Activated CD8-positive, alpha-beta T cell treated with anti-CD3 and anti-CD28 coated beads, Interleukin-2, amount 10 ng/mL, durations not matched to agents 7 days and 5 days (primary cell): ENCODE measurements at regions of chr10 and their contacts with region 1.

Region 1: DNA sequence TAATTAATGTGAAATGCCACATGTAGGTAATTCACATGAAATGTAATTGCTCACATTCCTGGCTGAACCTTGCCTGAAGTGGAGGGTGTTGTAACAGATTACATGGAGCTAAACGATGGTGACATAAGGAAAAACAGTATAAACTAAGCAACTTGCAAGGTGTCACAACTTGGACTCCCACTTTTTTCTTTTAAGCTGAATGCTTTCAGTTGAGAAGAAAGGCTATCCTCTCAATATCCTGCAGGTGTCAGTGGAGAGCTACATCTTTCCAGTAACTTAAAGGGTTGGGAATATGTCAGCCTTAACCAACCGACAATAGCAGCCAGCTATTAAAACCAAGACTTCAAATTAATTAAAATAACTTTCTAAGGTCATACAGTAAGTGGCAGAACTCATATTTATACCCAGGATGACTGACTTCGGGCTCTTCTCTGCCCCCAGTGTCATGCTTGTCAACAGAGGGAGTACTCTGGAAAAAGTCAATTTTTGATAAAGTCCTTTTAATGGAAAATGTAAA is 33.7 kb downstream of the NRBF2 start:
- DNase-seq: peak; percentile 57
- ATAC-seq: peak; percentile 45
- H3K4me3 Mint-ChIP-seq: no peak overlapping the region
- H3K27ac Mint-ChIP-seq: no peak overlapping the region
- H3K4me1 Mint-ChIP-seq: peaks cover 43% of the 10 kb centered on the region
- H3K27me3 Mint-ChIP-seq: no peaks in the 10 kb centered on the region

Region 2: DNA sequence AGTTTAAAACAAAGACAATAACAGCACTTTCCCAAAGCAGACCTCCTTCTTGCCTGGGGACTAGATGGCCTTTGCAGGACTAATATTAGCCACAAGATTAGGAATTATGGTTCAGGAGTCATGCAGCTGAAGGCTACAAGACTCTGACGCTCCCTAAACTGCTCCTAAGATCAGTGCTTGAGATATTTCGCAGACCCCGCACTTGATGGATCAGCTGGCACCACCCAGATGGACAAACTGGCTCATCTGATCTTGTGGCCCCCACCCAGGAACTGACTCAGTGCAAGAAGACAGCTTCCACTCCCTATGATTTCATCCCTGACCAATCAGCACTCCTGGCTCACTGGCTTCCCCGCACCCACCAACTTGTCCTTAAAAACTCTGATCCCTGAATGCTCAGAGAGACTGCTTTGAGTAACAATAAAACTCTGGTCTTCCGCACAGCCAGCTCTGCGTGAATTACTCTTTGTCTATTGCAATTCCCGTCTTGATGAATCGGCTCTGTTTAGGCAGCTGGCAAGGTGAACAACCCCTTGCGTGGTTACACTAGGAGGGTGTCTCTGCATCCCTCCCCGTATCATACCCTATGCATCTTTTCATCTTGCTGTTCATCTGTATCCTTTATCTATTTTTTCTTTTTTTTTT is 60.6 kb before region 1 on chr10:
- CTCF ChIA-PET with region 1: no interaction called
- POLR2A ChIA-PET with region 1: no interaction called
- DNase-seq: no peak
- ATAC-seq: no peak
- H3K4me3 Mint-ChIP-seq: no peak overlapping the region
- H3K27ac Mint-ChIP-seq: no peak overlapping the region
- H3K4me1 Mint-ChIP-seq: no peaks in the 10 kb centered on the region
- H3K27me3 Mint-ChIP-seq: peaks cover 5% of the 10 kb centered on the region

Region 3: GRCh38 chr10:63133056-63133820 is 33.6 kb before region 1 on chr10 and contains the start of gene NRBF2:
- CTCF ChIA-PET with region 1: interaction called, 10 read pairs
- POLR2A ChIA-PET with region 1: interaction called, 5 read pairs
- DNase-seq: peak; percentile 98
- ATAC-seq: peak; percentile 96
- H3K4me3 Mint-ChIP-seq: peak within 1 kb of the TSS; percentile 91
- H3K27ac Mint-ChIP-seq: peak within 1 kb of the TSS; percentile 97
- H3K4me1 Mint-ChIP-seq: peaks cover 38% of the 10 kb centered on the region
- H3K27me3 Mint-ChIP-seq: no peaks in the 10 kb centered on the region
- total RNA-seq, gene NRBF2: 21.8 to 22.6 TPM

Region 4: GRCh38 chr10:63206997-63207811 is 40.4 kb after region 1 on chr10:
- CTCF ChIA-PET with region 1: interaction called, 21 read pairs
- POLR2A ChIA-PET with region 1: no interaction called
- DNase-seq: no peak
- ATAC-seq: peak; percentile 48
- H3K4me3 Mint-ChIP-seq: peak overlapping the region; percentile 38
- H3K27ac Mint-ChIP-seq: peak overlapping the region; percentile 75
- H3K4me1 Mint-ChIP-seq: peaks cover 65% of the 10 kb centered on the region
- H3K27me3 Mint-ChIP-seq: no peaks in the 10 kb centered on the region

Region 5: DNA sequence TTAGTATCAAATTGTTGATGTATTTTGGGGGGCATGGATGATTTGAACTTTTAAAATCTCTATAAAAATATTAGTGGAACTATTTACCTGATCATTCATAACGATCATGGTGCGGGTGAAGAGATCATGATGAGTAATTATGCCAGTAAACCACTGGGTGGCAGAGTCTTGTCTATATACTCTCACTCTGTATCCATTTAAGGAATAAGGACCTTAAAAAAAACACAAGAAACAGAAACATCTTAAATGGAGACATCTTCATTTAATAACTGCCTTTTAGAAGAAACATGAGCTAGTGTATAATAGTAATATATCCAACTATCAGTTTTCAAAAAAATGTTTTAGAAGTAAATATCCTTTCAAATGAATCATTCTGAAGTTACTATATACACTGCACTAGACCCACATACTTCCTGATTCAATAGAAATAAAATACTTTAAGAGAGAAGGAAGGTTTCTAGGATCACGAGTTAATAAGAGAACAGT is 50.4 kb after region 1 on chr10:
- CTCF ChIA-PET with region 1: interaction called, 21 read pairs
- POLR2A ChIA-PET with region 1: no interaction called
- DNase-seq: peak; percentile 46
- ATAC-seq: peak; percentile 81
- H3K4me3 Mint-ChIP-seq: no peak overlapping the region
- H3K27ac Mint-ChIP-seq: no peak overlapping the region
- H3K4me1 Mint-ChIP-seq: peaks cover 45% of the 10 kb centered on the region
- H3K27me3 Mint-ChIP-seq: no peaks in the 10 kb centered on the region

Region 6: GRCh38 chr10:63261496-63261895 is 94.7 kb after region 1 on chr10:
- CTCF ChIA-PET with region 1: interaction called, 16 read pairs
- POLR2A ChIA-PET with region 1: no interaction called
- DNase-seq: no peak
- ATAC-seq: no peak
- H3K4me3 Mint-ChIP-seq: peak overlapping the region; percentile 31
- H3K27ac Mint-ChIP-seq: peak overlapping the region; percentile 52
- H3K4me1 Mint-ChIP-seq: peaks cover 57% of the 10 kb centered on the region
- H3K27me3 Mint-ChIP-seq: no peaks in the 10 kb centered on the region

Region 7: DNA sequence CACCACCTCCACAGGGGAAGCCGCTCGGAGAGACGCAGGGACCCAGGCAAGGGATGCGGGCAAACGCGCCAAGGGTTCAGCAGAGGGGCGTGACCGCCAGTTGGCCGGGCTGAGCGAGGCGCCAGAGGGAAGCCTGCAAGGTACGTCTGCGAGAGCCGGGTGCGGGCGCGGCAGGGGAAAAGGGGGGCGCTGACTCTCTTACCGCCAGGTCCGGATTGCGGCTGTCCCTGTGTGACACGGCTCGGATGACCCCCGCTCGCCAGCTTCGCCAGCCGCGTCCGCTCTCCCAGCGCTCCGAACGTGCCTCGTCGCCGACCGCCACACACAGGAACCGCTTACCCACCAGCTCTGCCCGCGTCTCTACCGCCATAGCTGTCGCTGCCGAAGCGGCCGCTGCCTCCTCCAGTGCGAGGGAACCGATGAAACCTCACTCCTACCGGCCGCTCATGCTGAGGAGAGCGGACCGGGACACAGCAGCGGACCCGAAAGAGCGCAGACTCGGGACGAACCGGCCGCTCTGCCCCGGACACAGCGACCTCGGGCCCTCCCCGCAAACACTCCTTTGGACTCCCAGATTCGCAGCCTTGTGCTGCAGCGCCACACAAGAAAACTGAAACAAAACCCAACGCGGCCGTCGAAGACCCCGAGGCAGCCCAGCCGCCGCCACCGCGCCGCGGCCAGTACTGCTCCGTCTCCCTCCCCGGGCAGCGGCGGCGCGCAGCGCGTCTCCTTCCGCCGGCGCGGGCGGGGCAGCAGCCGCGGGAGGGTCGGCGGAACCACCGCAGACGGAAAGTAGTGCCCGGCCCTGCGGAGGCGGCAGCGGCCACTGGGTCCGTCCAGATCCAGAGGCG is 298.7 kb after region 1 on chr10 and contains the start of gene JMJD1C:
- CTCF ChIA-PET with region 1: interaction called, 11 read pairs
- POLR2A ChIA-PET with region 1: no interaction called
- DNase-seq: peak; percentile 63
- ATAC-seq: peak; percentile 80
- H3K4me3 Mint-ChIP-seq: peak within 1 kb of the TSS; percentile 93
- H3K27ac Mint-ChIP-seq: peak within 1 kb of the TSS; percentile 87
- H3K4me1 Mint-ChIP-seq: peaks cover 17% of the 10 kb centered on the region
- H3K27me3 Mint-ChIP-seq: peaks cover 2% of the 10 kb centered on the region
- total RNA-seq, gene JMJD1C: 63.0 to 65.1 TPM

Region 8: DNA sequence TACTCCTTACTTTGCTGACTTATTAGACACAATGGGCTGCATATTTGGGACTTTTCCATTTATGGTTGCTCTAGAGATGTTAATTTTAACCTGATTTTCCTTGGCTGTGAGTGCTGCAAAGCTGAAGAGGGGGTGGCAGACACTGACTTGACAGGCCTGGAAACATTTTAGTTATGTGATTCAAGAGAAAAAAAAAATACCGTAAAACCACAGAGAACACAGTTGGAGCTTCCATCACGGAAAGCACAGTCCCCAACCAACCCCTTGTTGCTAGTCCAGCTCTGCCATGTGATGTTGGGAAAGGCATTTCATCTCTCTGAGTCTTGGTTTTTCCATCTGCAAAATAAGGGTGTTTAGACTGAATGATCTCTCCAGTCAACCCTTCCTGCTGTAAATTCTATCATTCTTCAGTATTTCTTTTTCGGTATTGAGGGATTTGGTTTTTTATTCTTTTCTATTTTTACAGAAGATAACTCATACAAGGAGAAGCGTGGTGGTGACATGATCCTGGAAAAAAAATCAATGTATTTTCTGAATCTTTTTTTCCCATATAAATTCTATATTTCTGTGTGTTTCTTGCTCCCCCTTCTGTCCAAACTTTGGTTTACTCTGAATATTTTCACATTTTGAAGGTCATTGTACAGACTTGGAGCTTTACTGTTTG is 600.5 kb after region 1 on chr10:
- CTCF ChIA-PET with region 1: interaction called, 10 read pairs
- POLR2A ChIA-PET with region 1: no interaction called
- DNase-seq: no peak
- ATAC-seq: no peak
- H3K4me3 Mint-ChIP-seq: no peak overlapping the region
- H3K27ac Mint-ChIP-seq: no peak overlapping the region
- H3K4me1 Mint-ChIP-seq: no peaks in the 10 kb centered on the region
- H3K27me3 Mint-ChIP-seq: peaks cover 12% of the 10 kb centered on the region